Endothelial cell of umbilical vein (primary cell): ENCODE measurements at regions of chr7 and their contacts with region 1.

Region 1: DNA sequence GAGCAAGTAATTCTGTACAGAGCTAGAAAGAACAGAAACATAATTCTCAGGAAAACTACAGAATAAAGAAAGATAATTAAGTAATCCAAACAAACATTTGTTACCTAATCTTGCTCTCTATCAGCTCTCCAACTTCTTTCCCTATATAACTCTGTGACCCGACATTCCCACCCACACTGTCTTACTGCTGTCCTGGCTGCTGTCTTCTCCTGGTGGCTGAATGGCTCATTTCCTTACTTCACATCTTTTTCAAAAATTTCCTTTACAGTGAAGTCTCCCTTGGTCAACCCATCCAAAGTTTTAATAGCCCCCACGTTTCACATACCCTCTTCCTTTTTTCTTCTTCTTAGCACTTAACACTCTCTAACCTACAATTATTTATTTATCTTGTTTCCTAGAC is 64.0 kb downstream of the HYCC1 start:
- DNase-seq: no peak
- H3K4me3 ChIP-seq: no peak overlapping the region
- H3K27ac ChIP-seq: no peak overlapping the region
- H3K4me1 ChIP-seq: no peaks in the 10 kb centered on the region
- H3K27me3 ChIP-seq: no peaks in the 10 kb centered on the region
- CTCF ChIP-seq: no peak
- POLR2A ChIP-seq: no peak

Region 2: GRCh38 chr7:22295402-22296264 is 654.3 kb before region 1 on chr7:
- CTCF ChIA-PET with region 1: no interaction called
- POLR2A ChIA-PET with region 1: no interaction called
- dilution Hi-C with region 1: no loop called
- intact Hi-C with region 1: no loop called
- DNase-seq: peak; percentile 80
- H3K4me3 ChIP-seq: no peak overlapping the region
- H3K27ac ChIP-seq: peak overlapping the region; percentile 10
- H3K4me1 ChIP-seq: peaks cover 5% of the 10 kb centered on the region
- H3K27me3 ChIP-seq: no peaks in the 10 kb centered on the region
- CTCF ChIP-seq: peak in 1 of 2 donors; percentile 13
- POLR2A ChIP-seq: no peak

Region 3: GRCh38 chr7:22962775-22963358 is 12.9 kb after region 1 on chr7:
- CTCF ChIA-PET with region 1: interaction called, 14 read pairs
- POLR2A ChIA-PET with region 1: no interaction called
- dilution Hi-C with region 1: no loop called
- intact Hi-C with region 1: no loop called
- DNase-seq: no peak
- H3K4me3 ChIP-seq: no peak overlapping the region
- H3K27ac ChIP-seq: no peak overlapping the region
- H3K4me1 ChIP-seq: no peaks in the 10 kb centered on the region
- H3K27me3 ChIP-seq: no peaks in the 10 kb centered on the region
- CTCF ChIP-seq: no peak
- POLR2A ChIP-seq: no peak